ENCODE measurements at regions of chr4 and their contacts with region 1.

Region 1: GRCh38 chr4:2536193-2537010 is at the start of gene FAM193A:
- DNase-seq: peak; percentile 99
- ATAC-seq: peak; percentile 91
- H3K4me3 ChIP-seq: peak within 1 kb of the TSS; percentile 60 to 88 (median 74)
- H3K4me3 Mint-ChIP-seq: peak within 1 kb of the TSS; percentile 95
- H3K27ac ChIP-seq: peak within 1 kb of the TSS; percentile 80 to 88
- H3K27ac Mint-ChIP-seq: peak within 1 kb of the TSS; percentile 93
- H3K4me1 ChIP-seq: peaks cover 17 to 24% of the 10 kb centered on the region in 2 donors
- H3K4me1 Mint-ChIP-seq: peaks cover 17% of the 10 kb centered on the region
- H3K27me3 ChIP-seq: no peaks in the 10 kb centered on the region
- H3K27me3 Mint-ChIP-seq: no peaks in the 10 kb centered on the region
- CTCF ChIP-seq: no peak
- total RNA-seq, gene FAM193A: 62.7 and 67.8 TPM in 2 replicates

Region 2: GRCh38 chr4:1721004-1721665 is 815.3 kb before region 1 on chr4 and contains the starts of genes TACC3 and TMEM129:
- CTCF ChIA-PET with region 1: no interaction called
- POLR2A ChIA-PET with region 1: no interaction called
- intact Hi-C with region 1: loop called (anchors 5 kb)
- DNase-seq: peak; percentile 98
- ATAC-seq: peak; percentile 81
- H3K4me3 ChIP-seq: peak within 1 kb of the TSS; percentile 41 to 69 (median 60)
- H3K4me3 Mint-ChIP-seq: peak within 1 kb of the TSS; percentile 93
- H3K27ac ChIP-seq: peak within 1 kb of the TSS; percentile 89 to 96
- H3K27ac Mint-ChIP-seq: peak within 1 kb of the TSS; percentile 98
- H3K4me1 ChIP-seq: peaks cover 59 to 84% of the 10 kb centered on the region in 2 donors
- H3K4me1 Mint-ChIP-seq: peaks cover 65% of the 10 kb centered on the region
- H3K27me3 ChIP-seq: no peaks in the 10 kb centered on the region
- H3K27me3 Mint-ChIP-seq: no peaks in the 10 kb centered on the region
- CTCF ChIP-seq: no peak
- total RNA-seq, gene TACC3: 47.9 and 54.5 TPM in 2 replicates
- total RNA-seq, gene TMEM129: 41.0 and 41.9 TPM in 2 replicates

Region 3: DNA sequence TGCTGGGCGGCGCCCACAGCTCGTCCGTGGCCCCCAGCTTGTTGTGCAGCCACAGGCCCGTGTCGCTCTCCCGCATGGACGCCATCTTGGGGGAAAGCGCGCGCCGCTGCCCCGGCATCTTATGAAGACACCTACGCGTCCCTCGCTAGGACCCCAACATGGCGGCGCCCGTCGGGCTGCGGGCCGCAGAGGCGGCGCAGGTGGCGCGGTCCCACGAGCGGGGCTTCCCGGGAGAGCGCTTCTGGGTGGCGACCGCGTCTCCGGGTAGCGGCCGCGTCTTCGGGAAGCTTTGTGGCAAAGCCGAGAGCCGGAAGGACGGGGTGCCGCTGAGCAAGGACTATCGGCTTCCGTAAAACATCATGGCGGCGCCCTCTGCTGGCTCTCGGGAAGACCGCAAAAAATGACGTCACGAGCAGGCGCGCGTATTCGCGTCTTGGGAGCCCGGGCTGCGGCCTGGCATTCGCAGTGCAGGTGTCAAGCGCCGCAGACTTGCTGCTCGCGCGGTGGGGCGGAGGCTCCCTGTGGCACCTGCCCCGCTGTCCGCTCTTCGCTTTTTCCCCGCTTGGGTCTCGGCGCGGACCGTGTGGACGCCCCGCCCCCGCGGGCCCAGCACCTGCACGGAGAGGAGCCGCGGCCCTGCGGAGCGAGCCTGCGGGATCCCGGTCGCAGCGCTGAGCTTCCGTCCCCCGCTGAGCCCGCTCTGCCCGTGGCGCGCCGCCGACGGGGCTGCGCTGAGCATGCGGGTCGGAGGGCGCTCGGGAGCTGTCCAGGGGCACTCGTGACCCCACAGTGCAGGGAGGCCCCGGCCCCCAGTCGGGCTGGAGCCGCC is 527.3 kb before region 1 on chr4 and contains the start of gene NELFA:
- CTCF ChIA-PET with region 1: no interaction called
- POLR2A ChIA-PET with region 1: no interaction called
- intact Hi-C with region 1: loop called (anchors 5 kb)
- DNase-seq: peak; percentile 99
- ATAC-seq: peak; percentile 82
- H3K4me3 ChIP-seq: peak within 1 kb of the TSS; percentile 61 to 93 (median 85)
- H3K4me3 Mint-ChIP-seq: peak within 1 kb of the TSS; percentile 95
- H3K27ac ChIP-seq: peak within 1 kb of the TSS; percentile 97 to 99
- H3K27ac Mint-ChIP-seq: peak within 1 kb of the TSS; percentile 92
- H3K4me1 ChIP-seq: peaks cover 10 to 21% of the 10 kb centered on the region in 2 donors
- H3K4me1 Mint-ChIP-seq: peaks cover 32% of the 10 kb centered on the region
- H3K27me3 ChIP-seq: no peaks in the 10 kb centered on the region
- H3K27me3 Mint-ChIP-seq: peaks cover 1% of the 10 kb centered on the region
- CTCF ChIP-seq: no peak
- total RNA-seq, gene NELFA: 60.7 and 63.5 TPM in 2 replicates

Region 4: GRCh38 chr4:2262143-2262943 is 274.1 kb before region 1 on chr4:
- CTCF ChIA-PET with region 1: no interaction called
- POLR2A ChIA-PET with region 1: no interaction called
- intact Hi-C with region 1: loop called (anchors 1 kb)
- DNase-seq: peak; percentile 99
- ATAC-seq: peak; percentile 87
- H3K4me3 ChIP-seq: peak overlapping the region in 4 of 5 experiments; percentile 63 to 80 (median 73)
- H3K4me3 Mint-ChIP-seq: peak overlapping the region; percentile 76
- H3K27ac ChIP-seq: peak overlapping the region; percentile 94 to 98
- H3K27ac Mint-ChIP-seq: peak overlapping the region; percentile 92
- H3K4me1 ChIP-seq: peaks cover 23 to 47% of the 10 kb centered on the region in 2 donors
- H3K4me1 Mint-ChIP-seq: peaks cover 20% of the 10 kb centered on the region
- H3K27me3 ChIP-seq: no peaks in the 10 kb centered on the region
- H3K27me3 Mint-ChIP-seq: no peaks in the 10 kb centered on the region
- CTCF ChIP-seq: no peak

Region 5: GRCh38 chr4:2449511-2450392 is 86.7 kb before region 1 on chr4:
- CTCF ChIA-PET with region 1: no interaction called
- POLR2A ChIA-PET with region 1: no interaction called
- intact Hi-C with region 1: no loop called
- DNase-seq: no peak
- ATAC-seq: no peak
- H3K4me3 ChIP-seq: no peak overlapping the region
- H3K4me3 Mint-ChIP-seq: no peak overlapping the region
- H3K27ac ChIP-seq: no peak overlapping the region
- H3K27ac Mint-ChIP-seq: no peak overlapping the region
- H3K4me1 ChIP-seq: no peaks in the 10 kb centered on the region
- H3K4me1 Mint-ChIP-seq: no peaks in the 10 kb centered on the region
- H3K27me3 ChIP-seq: no peaks in the 10 kb centered on the region
- H3K27me3 Mint-ChIP-seq: no peaks in the 10 kb centered on the region
- CTCF ChIP-seq: no peak

Region 6: DNA sequence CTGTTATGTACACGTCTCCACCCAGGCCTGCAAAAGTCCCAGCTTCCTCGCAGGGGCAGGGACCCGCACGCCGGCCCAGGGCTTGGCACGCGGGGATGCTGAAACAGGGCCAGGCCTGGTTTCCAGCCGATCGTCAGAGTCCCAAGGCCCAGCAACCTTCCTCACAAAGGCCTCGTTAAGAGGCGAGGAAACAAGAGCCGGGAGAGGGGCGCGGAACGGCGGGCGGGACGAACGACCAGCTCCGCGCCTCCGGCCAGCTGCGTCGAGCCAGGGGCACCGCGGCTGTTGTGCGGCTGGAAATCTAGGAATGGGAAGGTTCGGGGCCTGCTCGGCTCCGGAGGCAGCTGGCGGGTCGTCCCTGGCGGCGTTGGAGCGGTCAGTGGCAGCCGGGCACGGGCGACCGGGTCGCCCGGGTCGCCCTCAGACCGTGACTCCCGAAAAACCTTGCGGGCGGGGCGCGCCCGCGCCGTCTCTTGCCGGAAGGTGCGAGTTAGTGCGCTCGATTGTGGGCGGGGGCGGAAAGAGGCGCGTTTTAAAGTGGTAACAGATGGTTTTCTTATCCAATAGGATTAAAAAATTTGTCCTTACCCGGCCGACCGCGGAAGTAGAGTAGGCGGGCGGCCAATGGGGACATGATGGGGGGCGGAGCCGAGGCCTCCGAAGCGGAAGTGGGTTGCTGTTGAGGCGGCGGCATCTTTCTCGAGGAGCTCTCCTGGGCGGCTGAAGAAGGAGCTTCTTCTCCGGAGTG is 67.8 kb before region 1 on chr4 and contains the start of gene RNF4:
- CTCF ChIA-PET with region 1: interaction called, 10 read pairs
- POLR2A ChIA-PET with region 1: interaction called, 10 read pairs
- intact Hi-C with region 1: loop called (anchors 1 kb)
- DNase-seq: peak; percentile 96
- ATAC-seq: peak; percentile 85
- H3K4me3 ChIP-seq: peak within 1 kb of the TSS; percentile 77 to 99 (median 90)
- H3K4me3 Mint-ChIP-seq: peak within 1 kb of the TSS; percentile 99
- H3K27ac ChIP-seq: peak within 1 kb of the TSS; percentile 90 to 97
- H3K27ac Mint-ChIP-seq: peak within 1 kb of the TSS; percentile 99
- H3K4me1 ChIP-seq: peaks cover 31 to 33% of the 10 kb centered on the region in 2 donors
- H3K4me1 Mint-ChIP-seq: peaks cover 45% of the 10 kb centered on the region
- H3K27me3 ChIP-seq: no peaks in the 10 kb centered on the region
- H3K27me3 Mint-ChIP-seq: no peaks in the 10 kb centered on the region
- CTCF ChIP-seq: no peak
- total RNA-seq, gene RNF4: 95.2 and 104 TPM in 2 replicates

Region 7: DNA sequence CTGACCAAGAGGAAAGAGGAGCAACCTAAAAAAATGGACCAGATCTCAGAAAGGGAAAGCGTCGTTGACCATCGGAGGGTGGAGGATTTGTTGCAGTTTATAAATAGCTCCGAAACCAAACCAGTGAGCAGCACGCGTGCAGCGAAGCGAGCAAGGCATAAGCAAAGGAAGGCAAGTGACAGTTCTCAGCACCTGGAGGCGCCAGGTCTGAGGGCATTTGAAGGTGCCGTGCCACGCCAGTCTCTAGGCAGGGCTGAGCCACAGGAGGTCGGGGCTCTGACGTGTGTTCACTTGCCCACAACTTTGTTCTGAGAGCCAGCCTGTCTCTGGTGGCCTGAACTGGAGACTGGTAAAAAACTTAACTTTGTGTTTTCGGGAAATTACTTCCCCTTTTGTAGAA is 160.0 kb after region 1 on chr4:
- CTCF ChIA-PET with region 1: no interaction called
- POLR2A ChIA-PET with region 1: no interaction called
- intact Hi-C with region 1: loop called (anchors 2 kb)
- DNase-seq: peak; percentile 93
- ATAC-seq: peak; percentile 96
- H3K4me3 ChIP-seq: peak overlapping the region; percentile 17 to 69 (median 35)
- H3K4me3 Mint-ChIP-seq: peak overlapping the region; percentile 78
- H3K27ac ChIP-seq: peak overlapping the region; percentile 85 to 87
- H3K27ac Mint-ChIP-seq: peak overlapping the region; percentile 93
- H3K4me1 ChIP-seq: peaks cover 47 to 55% of the 10 kb centered on the region in 2 donors
- H3K4me1 Mint-ChIP-seq: peaks cover 55% of the 10 kb centered on the region
- H3K27me3 ChIP-seq: no peaks in the 10 kb centered on the region
- H3K27me3 Mint-ChIP-seq: no peaks in the 10 kb centered on the region
- CTCF ChIP-seq: no peak

Region 8: GRCh38 chr4:2852481-2852921 is 316.1 kb after region 1 on chr4:
- CTCF ChIA-PET with region 1: no interaction called
- POLR2A ChIA-PET with region 1: no interaction called
- intact Hi-C with region 1: no loop called
- DNase-seq: peak; percentile 87
- ATAC-seq: peak; percentile 83
- H3K4me3 ChIP-seq: peak overlapping the region; percentile 8 to 48 (median 23)
- H3K4me3 Mint-ChIP-seq: peak overlapping the region; percentile 76
- H3K27ac ChIP-seq: peak overlapping the region; percentile 72 to 81
- H3K27ac Mint-ChIP-seq: peak overlapping the region; percentile 79
- H3K4me1 ChIP-seq: peaks cover 88% of the 10 kb centered on the region in 2 donors
- H3K4me1 Mint-ChIP-seq: peaks cover 76% of the 10 kb centered on the region
- H3K27me3 ChIP-seq: no peaks in the 10 kb centered on the region
- H3K27me3 Mint-ChIP-seq: no peaks in the 10 kb centered on the region
- CTCF ChIP-seq: no peak